Aorta (tissue), 5 donors: ENCODE measurements at regions of chr18 and their contacts with region 1.

Region 1: GRCh38 chr18:58180738-58181353 is 136.8 kb downstream of the NEDD4L start:
- DNase-seq: no peak
- ATAC-seq: no peak
- H3K4me3 ChIP-seq: no peak overlapping the region
- H3K27ac ChIP-seq: no peak overlapping the region
- H3K4me1 ChIP-seq: no peaks in the 10 kb centered on the region
- H3K27me3 ChIP-seq: no peaks in the 10 kb centered on the region

Region 2: GRCh38 chr18:58321986-58322385 is 141.1 kb after region 1 on chr18:
- intact Hi-C with region 1: loop called in 1 of 2 experiments (anchors 10 kb)
- DNase-seq: peak in 1 of 2 donors; percentile 69
- ATAC-seq: peak; percentile 90
- H3K4me3 ChIP-seq: no peak overlapping the region
- H3K27ac ChIP-seq: no peak overlapping the region
- H3K4me1 ChIP-seq: no peaks in the 10 kb centered on the region
- H3K27me3 ChIP-seq: no peaks in the 10 kb centered on the region

Region 3: GRCh38 chr18:58511897-58512581 is 331.2 kb after region 1 on chr18:
- intact Hi-C with region 1: no loop called
- DNase-seq: no peak
- ATAC-seq: no peak
- H3K4me3 ChIP-seq: no peak overlapping the region
- H3K27ac ChIP-seq: no peak overlapping the region
- H3K4me1 ChIP-seq: no peaks in the 10 kb centered on the region
- H3K27me3 ChIP-seq: no peaks in the 10 kb centered on the region